HepG2 (cell line): ENCODE measurements at regions of chr9 and their contacts with region 1.

Region 1: GRCh38 chr9:17462869-17463464 is 115.9 kb upstream of the SH3GL2 start:
- DNase-seq: peak; percentile 31
- ATAC-seq: no peak
- H3K4me3 ChIP-seq: no peak overlapping the region
- H3K27ac ChIP-seq: no peak overlapping the region
- H3K4me1 ChIP-seq: no peaks in the 10 kb centered on the region
- H3K27me3 ChIP-seq: no peaks in the 10 kb centered on the region
- CTCF ChIP-seq: peak; percentile 70
- EP300 ChIP-seq: no peak
- POLR2A ChIP-seq: no peak
- RAD21 ChIP-seq: peak; percentile 49; the same call in 1 of the 2 replicates

Region 2: GRCh38 chr9:15873569-15874177 is 1589.3 kb before region 1 on chr9:
- CTCF ChIA-PET with region 1: interaction called, 3 read pairs
- POLR2A ChIA-PET with region 1: no interaction called
- in situ Hi-C with region 1: loop called (anchors 25 kb)
- intact Hi-C with region 1: loop called (anchors 1 kb)
- DNase-seq: peak; percentile 33
- ATAC-seq: peak; percentile 59; the same call in 2 of the 3 replicates
- H3K4me3 ChIP-seq: no peak overlapping the region
- H3K27ac ChIP-seq: no peak overlapping the region
- H3K4me1 ChIP-seq: no peaks in the 10 kb centered on the region
- H3K27me3 ChIP-seq: no peaks in the 10 kb centered on the region
- CTCF ChIP-seq: peak; percentile 61
- EP300 ChIP-seq: no peak
- POLR2A ChIP-seq: no peak
- RAD21 ChIP-seq: no peak

Region 3: GRCh38 chr9:17063535-17064135 is 399.3 kb before region 1 on chr9:
- CTCF ChIA-PET with region 1: interaction called, 15 read pairs
- POLR2A ChIA-PET with region 1: no interaction called
- in situ Hi-C with region 1: no loop called
- intact Hi-C with region 1: loop called (anchors 1 kb)
- DNase-seq: peak; percentile 45
- ATAC-seq: peak; percentile 98
- H3K4me3 ChIP-seq: no peak overlapping the region
- H3K27ac ChIP-seq: no peak overlapping the region
- H3K4me1 ChIP-seq: no peaks in the 10 kb centered on the region
- H3K27me3 ChIP-seq: no peaks in the 10 kb centered on the region
- CTCF ChIP-seq: peak; percentile 78
- EP300 ChIP-seq: no peak
- POLR2A ChIP-seq: no peak
- RAD21 ChIP-seq: no peak

Region 4: GRCh38 chr9:17116400-17116837 is 346.5 kb before region 1 on chr9:
- CTCF ChIA-PET with region 1: interaction called, 9 read pairs
- POLR2A ChIA-PET with region 1: no interaction called
- in situ Hi-C with region 1: loop called (anchors 25 kb)
- intact Hi-C with region 1: loop called (anchors 1 kb)
- DNase-seq: peak; percentile 20
- ATAC-seq: no peak
- H3K4me3 ChIP-seq: 0 out of 6 replicates have a peak overlapping the region, but pooled peaks of 1 of the 3 experiments have one; percentile 19
- H3K27ac ChIP-seq: no peak overlapping the region
- H3K4me1 ChIP-seq: peaks cover 7% of the 10 kb centered on the region
- H3K27me3 ChIP-seq: no peaks in the 10 kb centered on the region
- CTCF ChIP-seq: peak; percentile 37
- EP300 ChIP-seq: no peak
- POLR2A ChIP-seq: no peak
- RAD21 ChIP-seq: no peak

Region 5: GRCh38 chr9:17219261-17219660 is 243.7 kb before region 1 on chr9:
- CTCF ChIA-PET with region 1: interaction called, 4 read pairs
- POLR2A ChIA-PET with region 1: no interaction called
- in situ Hi-C with region 1: no loop called
- intact Hi-C with region 1: loop called (anchors 5 kb)
- DNase-seq: no peak
- ATAC-seq: no peak
- H3K4me3 ChIP-seq: no peak overlapping the region
- H3K27ac ChIP-seq: no peak overlapping the region
- H3K4me1 ChIP-seq: no peaks in the 10 kb centered on the region
- H3K27me3 ChIP-seq: no peaks in the 10 kb centered on the region
- CTCF ChIP-seq: no peak
- EP300 ChIP-seq: no peak
- POLR2A ChIP-seq: no peak
- RAD21 ChIP-seq: no peak

Region 6: DNA sequence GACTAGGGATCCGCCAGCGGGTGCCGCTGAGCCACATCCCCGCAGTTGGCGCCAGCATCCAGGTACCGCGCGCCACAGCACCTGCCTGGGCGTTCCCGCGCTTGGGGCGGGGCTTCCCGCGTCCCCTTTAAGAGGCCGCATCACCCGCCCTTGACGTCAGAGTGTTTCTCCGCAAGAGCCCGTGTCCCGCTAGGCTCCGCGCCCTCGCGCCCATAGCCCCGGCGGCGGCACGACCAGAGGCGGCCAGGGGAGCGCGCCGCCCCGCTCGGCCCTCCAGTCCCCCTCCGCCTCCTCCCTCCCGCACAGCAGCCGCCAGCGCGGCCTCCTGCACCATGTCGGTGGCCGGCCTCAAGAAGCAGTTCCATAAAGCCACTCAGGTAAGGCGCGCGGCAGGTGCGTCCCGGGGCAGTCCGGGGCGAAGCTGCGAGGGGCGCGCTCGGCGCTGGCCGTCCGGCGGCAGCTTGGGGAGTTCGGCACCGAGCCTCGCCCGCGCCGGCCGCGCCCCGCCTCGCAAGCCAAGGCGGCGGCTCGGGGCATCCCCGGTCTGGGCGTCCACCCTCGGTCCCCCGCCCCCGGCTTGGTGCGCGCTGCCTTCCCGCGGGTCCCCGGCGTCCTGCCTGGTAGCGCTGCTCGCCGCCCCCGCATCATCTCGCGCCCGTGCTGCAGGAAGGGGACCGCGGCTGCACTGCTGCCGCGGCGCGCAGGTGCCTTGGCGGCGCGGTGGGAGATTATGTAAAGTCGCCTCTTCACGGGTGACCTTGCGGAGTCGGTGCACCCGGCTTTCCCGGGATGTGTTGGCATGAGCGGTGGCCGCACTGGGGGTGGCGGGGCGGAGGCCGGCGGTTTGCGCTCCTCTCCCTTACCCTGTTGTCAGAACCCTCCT is 116.2 kb after region 1 on chr9 and contains the start of gene SH3GL2:
- CTCF ChIA-PET with region 1: no interaction called
- POLR2A ChIA-PET with region 1: no interaction called
- in situ Hi-C with region 1: no loop called
- intact Hi-C with region 1: no loop called
- DNase-seq: no peak
- ATAC-seq: peak; percentile 67
- H3K4me3 ChIP-seq: no peak within 1 kb of the TSS
- H3K27ac ChIP-seq: no peak within 1 kb of the TSS
- H3K4me1 ChIP-seq: no peaks in the 10 kb centered on the region
- H3K27me3 ChIP-seq: peaks cover 2 to 19% of the 10 kb centered on the region in 2 experiments; a peak in 3 of 5 replicates
- CTCF ChIP-seq: no peak
- EP300 ChIP-seq: no peak
- POLR2A ChIP-seq: no peak
- RAD21 ChIP-seq: no peak
- total RNA-seq, gene SH3GL2: 0.04 TPM in 1 of 2 replicates, not detected in the other